Mammary epithelial cell (primary cell): ENCODE measurements at regions of chr18 and their contacts with region 1.

Region 1: DNA sequence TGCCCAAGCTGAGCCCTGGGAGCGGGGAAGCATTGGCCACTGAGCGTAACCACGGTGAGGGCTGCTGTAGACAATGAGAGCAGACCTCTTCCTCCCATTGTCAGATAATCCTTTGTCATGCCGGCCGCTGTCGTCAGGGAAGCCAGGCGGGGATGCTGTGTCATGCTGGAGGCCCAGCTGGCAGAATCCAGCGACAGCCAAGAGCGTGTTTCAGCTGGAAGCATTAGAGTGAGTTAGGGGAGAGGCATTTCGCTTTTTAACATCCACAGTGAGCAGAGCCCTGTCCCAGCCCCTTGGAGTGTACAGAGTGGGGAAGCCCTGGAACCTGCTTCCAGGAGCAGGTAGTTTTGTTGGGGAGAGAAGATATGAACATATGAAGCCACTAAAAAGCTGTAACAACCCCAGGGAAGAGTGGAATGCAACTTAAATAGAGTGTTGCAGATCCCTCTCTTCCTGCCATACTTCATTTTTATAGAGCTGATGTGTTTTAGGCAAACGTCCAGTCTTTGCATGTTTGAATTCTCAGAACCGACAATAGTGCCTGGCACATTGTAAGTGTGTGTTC is 7.0 kb downstream of the CTIF start:
- DNase-seq: peak; percentile 79
- H3K4me3 ChIP-seq: no peak overlapping the region
- H3K27ac ChIP-seq: peak overlapping the region; percentile 83
- H3K4me1 ChIP-seq: peaks cover 76% of the 10 kb centered on the region
- H3K27me3 ChIP-seq: no peaks in the 10 kb centered on the region
- CTCF ChIP-seq: no peak

Region 2: GRCh38 chr18:48356811-48357631 is 188.8 kb before region 1 on chr18:
- CTCF ChIA-PET with region 1: no interaction called
- dilution Hi-C with region 1: no loop called
- in situ Hi-C with region 1: no loop called
- intact Hi-C with region 1: no loop called
- DNase-seq: no peak
- H3K4me3 ChIP-seq: no peak overlapping the region
- H3K27ac ChIP-seq: no peak overlapping the region
- H3K4me1 ChIP-seq: peaks cover 34% of the 10 kb centered on the region
- H3K27me3 ChIP-seq: no peaks in the 10 kb centered on the region
- CTCF ChIP-seq: no peak

Region 3: DNA sequence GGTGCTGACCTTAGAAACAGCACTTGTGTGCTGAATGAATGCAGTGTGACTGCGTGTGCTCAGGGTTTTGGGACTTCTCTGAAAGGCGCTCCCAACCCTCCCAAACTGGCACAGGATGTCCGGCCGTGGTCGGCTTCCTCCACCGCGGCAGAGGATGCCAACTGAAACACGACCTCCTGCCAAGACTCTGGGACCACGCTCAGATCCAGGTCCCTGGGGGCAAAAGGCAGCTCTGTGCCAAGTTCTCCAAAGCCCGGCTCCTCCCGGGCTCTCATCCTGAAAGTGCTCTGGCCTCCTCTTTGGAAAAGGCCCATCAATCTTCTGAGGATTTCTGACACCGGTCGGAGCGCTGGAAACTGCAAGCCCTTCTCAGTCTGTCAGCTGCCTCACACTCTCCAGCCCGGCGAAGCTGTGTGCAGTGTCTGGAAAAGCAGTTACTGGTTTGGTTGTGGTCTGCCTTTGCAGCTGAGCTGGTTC is 104.4 kb before region 1 on chr18:
- CTCF ChIA-PET with region 1: no interaction called
- dilution Hi-C with region 1: no loop called
- in situ Hi-C with region 1: no loop called
- intact Hi-C with region 1: no loop called
- DNase-seq: no peak
- H3K4me3 ChIP-seq: no peak overlapping the region
- H3K27ac ChIP-seq: no peak overlapping the region
- H3K4me1 ChIP-seq: peaks cover 26% of the 10 kb centered on the region
- H3K27me3 ChIP-seq: no peaks in the 10 kb centered on the region
- CTCF ChIP-seq: no peak

Region 4: GRCh38 chr18:48934723-48935432 is 389.0 kb after region 1 on chr18:
- CTCF ChIA-PET with region 1: no interaction called
- dilution Hi-C with region 1: no loop called
- in situ Hi-C with region 1: no loop called
- intact Hi-C with region 1: loop called (anchors 5 kb)
- DNase-seq: no peak
- H3K4me3 ChIP-seq: no peak overlapping the region
- H3K27ac ChIP-seq: peak overlapping the region; percentile 71
- H3K4me1 ChIP-seq: peaks cover 78% of the 10 kb centered on the region
- H3K27me3 ChIP-seq: no peaks in the 10 kb centered on the region
- CTCF ChIP-seq: no peak